Mammary epithelial cell (primary cell): ENCODE measurements at regions of chr15 and their contacts with region 1.

Region 1: DNA sequence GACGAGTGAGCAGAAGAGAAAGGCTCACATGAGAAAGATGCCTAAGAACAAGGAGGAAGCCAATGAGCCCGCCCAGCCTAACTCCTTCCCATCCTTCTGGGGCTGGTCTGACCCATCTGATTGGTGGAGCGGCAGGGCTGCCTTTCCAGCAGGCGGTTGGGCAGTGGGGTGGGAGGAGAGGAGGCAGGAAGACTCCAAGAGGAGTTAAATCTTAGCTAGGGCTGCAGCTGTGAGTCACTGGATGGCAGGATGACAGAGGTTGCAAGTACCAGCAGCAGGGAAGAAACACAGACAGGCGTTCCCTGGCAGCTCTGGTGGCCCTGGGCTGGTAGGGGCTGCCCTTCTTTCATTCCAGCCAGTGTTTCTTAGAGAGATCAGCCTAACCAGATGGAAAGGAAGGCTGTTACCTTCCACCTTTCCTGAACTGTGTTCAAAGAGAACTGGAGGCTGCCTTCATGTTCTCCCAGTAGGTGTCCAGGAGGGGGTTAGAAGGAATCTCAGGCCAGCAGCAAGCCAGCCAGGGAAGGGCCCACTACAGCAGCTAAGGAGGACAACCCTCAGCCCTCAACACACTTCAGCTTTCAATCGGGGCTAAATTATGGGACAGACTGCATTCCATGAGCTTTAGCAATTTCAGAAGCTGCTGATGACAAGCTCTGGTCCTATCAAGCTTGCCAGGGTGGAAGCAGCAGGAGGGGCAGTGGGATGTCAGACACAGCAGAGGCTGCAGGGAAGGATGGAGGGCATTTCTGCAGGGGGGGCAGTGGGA is 50.3 kb downstream of the CHSY1 start:
- DNase-seq: peak; percentile 94
- H3K4me3 ChIP-seq: no peak overlapping the region
- H3K27ac ChIP-seq: no peak overlapping the region
- H3K4me1 ChIP-seq: peaks cover 26% of the 10 kb centered on the region
- H3K27me3 ChIP-seq: no peaks in the 10 kb centered on the region
- CTCF ChIP-seq: no peak

Region 2: DNA sequence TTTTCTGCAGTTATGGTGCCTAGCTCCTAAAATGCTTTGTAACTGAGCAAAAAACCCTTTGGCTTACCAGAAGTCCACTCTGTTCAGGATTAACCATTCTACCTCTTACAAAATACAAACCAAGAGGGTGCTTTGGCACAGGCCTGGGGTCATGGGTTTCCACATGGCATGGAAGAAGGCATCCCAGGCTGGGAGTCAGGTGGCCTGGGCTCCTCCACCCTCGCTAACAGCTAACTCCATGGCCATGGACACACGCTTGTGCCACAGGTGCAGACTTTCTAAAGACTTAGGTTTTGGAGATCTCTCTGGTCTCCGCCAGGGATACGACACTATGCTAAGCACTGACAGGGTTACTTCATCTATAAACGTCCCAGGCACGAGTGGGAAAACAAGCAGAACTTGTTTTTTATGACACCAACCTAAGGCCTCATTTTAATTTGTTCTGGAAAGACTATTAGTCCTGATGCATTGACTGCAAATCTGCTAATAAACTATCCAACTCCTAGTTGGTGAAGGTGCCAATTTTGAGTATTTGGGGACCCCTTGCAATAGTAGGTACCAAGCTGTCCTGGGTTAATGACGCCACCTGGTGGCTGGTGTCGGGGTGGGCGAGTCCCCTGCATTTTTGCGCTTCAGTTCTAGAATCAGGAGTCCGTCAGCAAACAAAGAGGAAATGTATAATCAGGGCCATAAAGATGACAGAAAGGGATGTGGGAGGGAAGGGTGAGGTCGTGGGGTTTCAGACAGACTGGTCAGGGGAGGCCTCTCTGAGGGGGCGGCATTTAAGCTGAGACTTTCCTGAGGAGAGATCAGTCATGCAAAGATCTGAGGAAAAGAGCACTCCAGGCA is 332.2 kb before region 1 on chr15:
- CTCF ChIA-PET with region 1: no interaction called
- dilution Hi-C with region 1: no loop called
- in situ Hi-C with region 1: no loop called
- intact Hi-C with region 1: no loop called
- DNase-seq: no peak
- H3K4me3 ChIP-seq: no peak overlapping the region
- H3K27ac ChIP-seq: no peak overlapping the region
- H3K4me1 ChIP-seq: peaks cover 4% of the 10 kb centered on the region
- H3K27me3 ChIP-seq: no peaks in the 10 kb centered on the region
- CTCF ChIP-seq: peak; percentile 49 to 55

Region 3: GRCh38 chr15:101187820-101188636 is 13.6 kb before region 1 on chr15:
- CTCF ChIA-PET with region 1: no interaction called
- dilution Hi-C with region 1: no loop called
- in situ Hi-C with region 1: no loop called
- intact Hi-C with region 1: loop called (anchors 2 kb)
- DNase-seq: no peak
- H3K4me3 ChIP-seq: no peak overlapping the region
- H3K27ac ChIP-seq: no peak overlapping the region
- H3K4me1 ChIP-seq: peaks cover 21% of the 10 kb centered on the region
- H3K27me3 ChIP-seq: no peaks in the 10 kb centered on the region
- CTCF ChIP-seq: no peak